Heart left ventricle (tissue), 16 donors: ENCODE measurements at regions of chr20 and their contacts with region 1.

Region 1: DNA sequence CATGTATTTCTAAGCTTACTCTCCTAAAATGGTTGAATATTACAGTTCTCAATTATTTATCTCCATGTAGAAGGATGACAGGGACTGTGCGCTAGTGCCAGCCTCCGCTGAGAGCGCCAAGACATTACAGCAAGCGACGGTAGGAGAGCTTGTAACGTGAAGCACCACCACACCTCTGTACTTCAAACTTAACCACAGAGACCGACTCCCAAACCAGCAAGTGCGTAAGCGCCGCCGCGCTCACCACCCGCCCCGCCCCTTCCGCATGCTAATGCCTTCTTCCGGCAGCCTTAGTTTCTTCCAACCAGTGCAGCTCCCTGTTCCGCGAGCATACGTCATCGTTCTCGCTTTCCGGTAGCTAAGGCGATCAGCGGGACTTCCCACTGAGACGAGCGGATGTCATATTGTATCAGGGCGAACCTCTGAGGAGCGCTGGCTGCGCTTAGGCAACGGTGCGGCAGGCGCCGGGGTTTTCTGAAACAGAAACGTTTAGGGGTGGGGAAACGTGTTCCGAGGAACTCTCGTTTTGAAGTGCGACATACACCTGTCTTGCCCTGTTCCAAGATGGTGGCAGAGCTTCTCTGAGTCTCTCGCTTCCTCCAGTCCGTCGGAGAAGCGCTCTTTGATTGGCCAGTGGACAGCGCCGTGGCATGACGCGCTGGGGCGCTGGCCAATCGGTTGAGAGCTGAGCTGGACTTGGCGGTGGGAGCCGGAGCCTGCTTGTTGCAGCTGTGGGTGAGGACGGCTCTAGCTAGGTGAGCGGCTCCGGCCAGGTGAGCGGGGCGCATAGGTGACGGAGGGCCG is at the start of gene SEC23B:
- DNase-seq: peak; percentile 97 to 99 (median 97)
- ATAC-seq: peak; percentile 99
- H3K4me3 ChIP-seq: peak within 1 kb of the TSS; percentile 68 to 96 (median 77)
- H3K27ac ChIP-seq: peak within 1 kb of the TSS; percentile 91 to 99 (median 95)
- H3K4me1 ChIP-seq: peaks cover 0 to 44% (median 10%) of the 10 kb centered on the region in 12 donors
- H3K27me3 ChIP-seq: peaks cover 0 to 23% (median 0%) of the 10 kb centered on the region in 9 donors
- CTCF ChIP-seq: no peak
- POLR2A ChIP-seq: peak; percentile 11 to 68
- total RNA-seq, gene SEC23B: 8.5 to 29.2 (median 11.9) TPM

Region 2: GRCh38 chr20:17968366-17969279 is 538.8 kb before region 1 on chr20 and contains the starts of genes MGME1 and SNX5:
- intact Hi-C with region 1: loop called in 1 of 10 experiments (anchors 10 kb)
- DNase-seq: peak; percentile 99 to 100 (median 100)
- ATAC-seq: peak; percentile 97 to 99 (median 98)
- H3K4me3 ChIP-seq: peak within 1 kb of the TSS; percentile 54 to 97 (median 91)
- H3K27ac ChIP-seq: peak within 1 kb of the TSS; percentile 85 to 100 (median 96)
- H3K4me1 ChIP-seq: peaks cover 2 to 80% (median 67%) of the 10 kb centered on the region in 12 donors
- H3K27me3 ChIP-seq: no peaks in the 10 kb centered on the region
- CTCF ChIP-seq: peak in 3 of 12 donors; percentile 5 to 16 (median 6)
- POLR2A ChIP-seq: peak in 1 of 2 donors; percentile 54
- total RNA-seq, gene MGME1: 8.6 to 22.0 (median 11.8) TPM
- total RNA-seq, gene SNX5: 36.6 to 75.0 (median 45.9) TPM

Region 3: GRCh38 chr20:18496740-18497592 is 10.5 kb before region 1 on chr20 and contains the start of gene RBBP9:
- intact Hi-C with region 1: loop called in 1 of 10 experiments (anchors 1 kb)
- DNase-seq: peak; percentile 87 to 94 (median 90)
- ATAC-seq: peak; percentile 99 to 100 (median 100)
- H3K4me3 ChIP-seq: peak within 1 kb of the TSS; percentile 66 to 90 (median 76)
- H3K27ac ChIP-seq: peak within 1 kb of the TSS in 11 of 12 donors; percentile 31 to 76 (median 65)
- H3K4me1 ChIP-seq: peaks cover 3 to 16% (median 13%) of the 10 kb centered on the region in 12 donors
- H3K27me3 ChIP-seq: no peaks in the 10 kb centered on the region
- CTCF ChIP-seq: no peak
- POLR2A ChIP-seq: peak in 1 of 2 donors; percentile 8
- total RNA-seq, gene RBBP9: 4.6 to 9.1 (median 6.2) TPM